Dendritic cell treated with granulocyte-macrophage colony-stimulating factor and Interleukin-4, amounts not matched to agents 40 ng/mL and 50 ng/mL, for 4 days (primary cell): ENCODE measurements at regions of chr7 and their contacts with region 1.

Region 1: GRCh38 chr7:141701489-141702046 is 398 bp downstream of the DENND11 start:
- H3K4me3 Mint-ChIP-seq: peak overlapping the region; percentile 77
- H3K27ac Mint-ChIP-seq: peak overlapping the region; percentile 61
- H3K4me1 Mint-ChIP-seq: peaks cover 50% of the 10 kb centered on the region
- H3K27me3 Mint-ChIP-seq: peaks cover 14% of the 10 kb centered on the region

Region 2: GRCh38 chr7:141664450-141664849 is 37.1 kb before region 1 on chr7:
- intact Hi-C with region 1: loop called (anchors 2 kb)
- H3K4me3 Mint-ChIP-seq: no peak overlapping the region
- H3K27ac Mint-ChIP-seq: peak overlapping the region; percentile 97
- H3K4me1 Mint-ChIP-seq: peaks cover 81% of the 10 kb centered on the region
- H3K27me3 Mint-ChIP-seq: no peaks in the 10 kb centered on the region

Region 3: GRCh38 chr7:141737834-141738591 is 36.4 kb after region 1 on chr7 and contains the start of gene SSBP1:
- intact Hi-C with region 1: loop called (anchors 5 kb)
- H3K4me3 Mint-ChIP-seq: peak within 1 kb of the TSS; percentile 98
- H3K27ac Mint-ChIP-seq: peak within 1 kb of the TSS; percentile 97
- H3K4me1 Mint-ChIP-seq: peaks cover 29% of the 10 kb centered on the region
- H3K27me3 Mint-ChIP-seq: no peaks in the 10 kb centered on the region